GM10248 (cell line): ENCODE measurements at regions of chr15 and their contacts with region 1.

Region 1: GRCh38 chr15:73873889-73874511 is 636 bp downstream of the TBC1D21 start:
- DNase-seq: peak; percentile 53
- CTCF ChIP-seq: peak; percentile 66

Region 2: DNA sequence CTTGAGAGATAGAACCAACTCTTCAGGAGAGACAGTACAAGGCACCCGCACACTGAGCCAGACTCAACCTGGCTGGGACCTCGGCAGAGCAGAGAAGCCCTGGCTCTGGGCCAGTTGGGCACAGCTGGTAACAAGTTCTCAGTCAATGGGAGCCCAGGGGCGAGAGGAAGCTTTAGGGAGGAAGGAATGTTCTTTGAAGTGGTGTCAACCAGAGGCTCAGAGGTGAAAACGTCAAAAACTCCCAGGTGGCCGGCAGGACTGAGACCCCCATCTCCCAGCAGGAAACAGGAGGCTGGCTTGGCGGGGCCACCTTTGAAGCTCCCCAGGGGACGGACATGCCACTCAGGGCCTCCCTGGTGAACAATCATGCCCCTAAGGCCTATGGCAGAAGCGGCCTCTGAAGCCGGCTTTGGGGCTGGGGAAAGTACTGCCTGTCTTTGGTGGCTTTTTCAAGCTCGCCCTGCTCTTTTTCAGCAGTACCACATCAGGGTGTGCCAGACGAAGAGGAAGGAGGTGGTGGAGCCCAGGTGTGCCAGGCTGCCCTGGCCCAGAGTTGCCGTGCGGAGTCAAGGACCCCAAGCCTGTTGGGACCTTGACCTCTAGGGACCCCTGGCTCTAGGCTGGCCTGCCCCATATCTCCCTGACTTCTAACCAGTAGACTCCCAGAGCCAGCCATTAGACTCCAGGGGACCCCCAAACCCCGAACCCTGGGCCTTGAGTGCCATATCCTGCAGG is 17.4 kb before region 1 on chr15:
- CTCF ChIA-PET with region 1: interaction called, 10 read pairs
- POLR2A ChIA-PET with region 1: no interaction called
- DNase-seq: no peak
- CTCF ChIP-seq: no peak

Region 3: DNA sequence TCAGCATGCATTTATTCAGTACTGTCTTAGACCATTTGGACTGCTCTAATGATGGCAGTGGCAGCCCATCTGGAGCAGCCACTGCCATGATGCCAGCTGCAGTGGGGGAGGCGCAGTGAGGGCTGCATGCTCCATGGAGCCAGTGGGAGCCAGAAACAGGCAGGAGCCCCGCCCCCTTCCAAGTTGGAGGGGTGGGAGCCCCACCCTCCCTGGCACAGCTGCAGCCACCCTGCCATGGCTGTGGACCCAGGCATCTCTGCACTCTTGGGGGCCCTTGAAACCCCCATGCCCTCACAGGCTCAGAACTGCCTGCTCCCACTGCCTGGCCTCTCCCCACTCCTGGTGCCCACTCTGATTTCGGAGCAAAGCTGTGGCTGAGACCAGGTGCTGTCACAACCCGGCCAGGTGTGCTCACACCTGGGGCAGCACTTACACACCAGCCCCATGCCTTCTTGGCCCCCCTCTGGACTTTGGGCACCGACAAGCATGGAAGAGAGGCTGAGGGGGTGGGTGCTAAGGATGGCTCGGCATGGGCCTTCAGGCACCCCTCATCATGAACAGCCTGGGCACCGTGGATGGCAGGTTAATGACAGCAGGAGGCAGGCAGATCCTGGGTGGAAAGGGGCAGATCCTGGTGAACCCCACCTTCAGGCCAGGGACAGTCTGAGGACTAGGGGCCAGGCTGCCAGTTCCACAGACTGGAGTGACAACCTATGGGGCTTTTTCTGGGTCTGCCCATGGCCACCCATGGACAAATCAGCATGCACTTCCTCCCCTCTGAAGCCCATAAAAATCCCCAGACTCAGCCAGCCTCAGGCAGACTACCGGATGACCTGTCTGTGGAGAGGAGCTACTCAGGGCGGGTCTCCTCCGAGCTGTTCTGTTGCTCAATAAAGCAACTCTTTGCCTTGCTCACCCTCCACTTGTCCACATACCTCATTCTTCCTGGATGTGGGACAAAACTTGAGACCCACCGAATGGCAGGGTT is 17.6 kb after region 1 on chr15:
- CTCF ChIA-PET with region 1: interaction called, 14 read pairs
- POLR2A ChIA-PET with region 1: no interaction called
- DNase-seq: no peak
- CTCF ChIP-seq: no peak

Region 4: GRCh38 chr15:73908030-73908821 is 34.2 kb after region 1 on chr15:
- CTCF ChIA-PET with region 1: interaction called, 112 read pairs
- POLR2A ChIA-PET with region 1: no interaction called
- DNase-seq: peak; percentile 79
- CTCF ChIP-seq: peak; percentile 98